Naive thymus-derived CD8-positive, alpha-beta T cell (primary cell): ENCODE measurements at regions of chrX and their contacts with region 1.

Region 1: GRCh38 chrX:40735325-40736169 is at the start of gene MED14:
- DNase-seq: peak; percentile 83 to 98 (median 93)
- ATAC-seq: peak; percentile 89 to 91
- H3K4me3 Mint-ChIP-seq: peak within 1 kb of the TSS; percentile 91 to 99 (median 92)
- H3K27ac Mint-ChIP-seq: peak within 1 kb of the TSS; percentile 94 to 99 (median 98)
- H3K4me1 Mint-ChIP-seq: peaks cover 13 to 54% (median 47%) of the 10 kb centered on the region in 4 donors
- H3K27me3 Mint-ChIP-seq: no peaks in the 10 kb centered on the region
- polyA plus RNA-seq, gene MED14: 6.0 to 11.7 (median 6.7) TPM

Region 2: DNA sequence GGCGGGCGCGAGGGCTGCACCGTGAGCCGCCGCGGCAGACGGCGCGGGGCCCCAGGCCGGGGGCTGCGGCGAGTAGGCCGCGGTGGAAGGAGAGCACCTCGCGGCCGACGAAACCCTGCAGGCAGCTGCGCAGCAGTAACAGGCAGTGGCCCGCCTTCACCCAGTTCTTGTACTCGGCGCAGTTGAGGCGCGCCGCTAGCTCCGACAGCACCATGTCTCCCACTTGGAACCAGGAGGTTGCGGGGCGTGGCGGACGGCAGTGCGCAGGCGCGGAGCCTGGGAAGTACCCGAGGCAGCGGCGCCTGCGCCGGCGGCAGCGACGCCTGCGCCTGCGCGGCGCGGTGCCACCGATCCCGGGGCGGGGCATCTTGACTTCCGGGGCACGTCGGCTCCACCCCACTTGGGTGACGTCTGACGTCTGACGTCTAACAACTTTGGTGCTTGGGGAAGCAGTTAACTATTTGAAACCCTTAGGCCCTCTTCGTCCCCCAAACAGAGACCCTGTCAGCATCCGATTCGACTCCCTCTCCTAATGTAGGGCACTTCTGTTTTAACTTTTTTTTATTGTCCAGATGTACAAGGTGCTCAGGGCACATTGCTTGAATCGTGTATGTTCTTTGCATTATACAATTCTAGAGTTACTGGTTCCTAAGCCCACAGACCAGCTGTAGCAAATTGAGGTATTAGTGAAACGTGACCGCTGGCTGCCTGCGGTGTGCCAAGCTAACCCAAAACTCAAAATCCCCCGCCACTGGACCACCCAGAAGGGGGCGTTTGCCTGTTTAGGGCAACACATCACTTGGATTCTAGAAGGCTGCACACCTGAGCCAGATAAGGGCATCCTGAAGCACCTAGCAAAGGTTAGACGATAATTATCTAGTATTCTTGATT is 88.0 kb before region 1 on chrX and contains the start of gene CXorf38:
- POLR2A ChIA-PET with region 1: interaction called, 12 read pairs
- DNase-seq: peak; percentile 87 to 98 (median 92)
- ATAC-seq: peak; percentile 75 to 77
- H3K4me3 Mint-ChIP-seq: peak within 1 kb of the TSS; percentile 92 to 99 (median 96)
- H3K27ac Mint-ChIP-seq: peak within 1 kb of the TSS; percentile 95 to 98 (median 96)
- H3K4me1 Mint-ChIP-seq: peaks cover 21 to 37% (median 31%) of the 10 kb centered on the region in 4 donors
- H3K27me3 Mint-ChIP-seq: no peaks in the 10 kb centered on the region
- polyA plus RNA-seq, gene CXorf38: 36.6 to 45.2 (median 37.2) TPM

Region 3: GRCh38 chrX:40755291-40756249 is 20.0 kb after region 1 on chrX:
- POLR2A ChIA-PET with region 1: no interaction called
- DNase-seq: no peak
- ATAC-seq: no peak
- H3K4me3 Mint-ChIP-seq: no peak overlapping the region
- H3K27ac Mint-ChIP-seq: no peak overlapping the region
- H3K4me1 Mint-ChIP-seq: peaks cover 0 to 2% (median 0%) of the 10 kb centered on the region in 4 donors
- H3K27me3 Mint-ChIP-seq: no peaks in the 10 kb centered on the region

Region 4: GRCh38 chrX:40832723-40833122 is 97.2 kb after region 1 on chrX:
- POLR2A ChIA-PET with region 1: no interaction called
- DNase-seq: no peak
- ATAC-seq: no peak
- H3K4me3 Mint-ChIP-seq: peak overlapping the region in 1 of 10 donors; percentile 69
- H3K27ac Mint-ChIP-seq: no peak overlapping the region
- H3K4me1 Mint-ChIP-seq: no peaks in the 10 kb centered on the region
- H3K27me3 Mint-ChIP-seq: peaks cover 0 to 2% (median 0%) of the 10 kb centered on the region in 5 donors